ENCODE measurements at regions of chr3 and their contacts with region 1.

Region 1: GRCh38 chr3:86723433-86723832 is 267.5 kb downstream of the VGLL3 start:
- DNase-seq: peak; percentile 41
- ATAC-seq: peak; percentile 97
- H3K4me3 ChIP-seq: no peak overlapping the region
- H3K27ac ChIP-seq: no peak overlapping the region
- H3K4me1 ChIP-seq: 0 out of 2 replicates have a peak, but pooled peaks cover 4% of the 10 kb centered on the region
- H3K27me3 ChIP-seq: no peaks in the 10 kb centered on the region
- CTCF ChIP-seq: no peak

Region 2: DNA sequence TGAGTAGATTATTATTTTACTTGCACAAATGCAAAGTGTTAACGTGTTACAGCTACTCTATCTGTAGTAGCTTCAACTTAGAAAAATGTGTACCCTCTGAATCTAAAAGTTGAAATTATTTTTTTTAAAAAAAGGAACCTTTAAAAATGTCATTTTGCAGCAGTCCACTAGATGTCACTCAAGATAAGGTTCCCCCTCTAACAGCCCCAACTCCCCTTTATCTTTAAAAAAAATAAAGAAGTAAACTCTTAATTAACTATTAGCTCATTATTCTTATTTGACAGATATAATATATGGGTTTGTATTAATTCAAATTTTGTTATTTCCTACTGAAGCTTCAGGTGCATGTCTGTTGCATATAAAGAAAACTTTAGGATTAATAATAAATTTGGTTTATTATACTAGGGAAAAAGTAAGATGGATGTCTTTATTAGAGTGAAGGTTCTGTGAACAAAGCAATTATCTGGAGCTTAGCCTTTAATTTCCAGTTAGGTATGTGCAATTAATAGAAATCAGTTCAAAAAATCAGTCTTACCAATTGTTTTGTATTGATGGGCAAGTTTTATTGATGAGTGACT is 21.0 kb before region 1 on chr3:
- CTCF ChIA-PET with region 1: no interaction called
- POLR2A ChIA-PET with region 1: no interaction called
- intact Hi-C with region 1: loop called (anchors 2 kb)
- DNase-seq: peak; percentile 33
- ATAC-seq: no peak; the same call in 1 of the 2 replicates
- H3K4me3 ChIP-seq: no peak overlapping the region
- H3K27ac ChIP-seq: no peak overlapping the region
- H3K4me1 ChIP-seq: no peaks in the 10 kb centered on the region
- H3K27me3 ChIP-seq: no peaks in the 10 kb centered on the region
- CTCF ChIP-seq: peak; percentile 73

Region 3: GRCh38 chr3:86743233-86743632 is 19.8 kb after region 1 on chr3:
- CTCF ChIA-PET with region 1: no interaction called
- POLR2A ChIA-PET with region 1: no interaction called
- intact Hi-C with region 1: loop called (anchors 1 kb)
- DNase-seq: peak; percentile 50
- ATAC-seq: peak; percentile 91
- H3K4me3 ChIP-seq: no peak overlapping the region
- H3K27ac ChIP-seq: no peak overlapping the region
- H3K4me1 ChIP-seq: peaks cover 6% of the 10 kb centered on the region
- H3K27me3 ChIP-seq: no peaks in the 10 kb centered on the region
- CTCF ChIP-seq: no peak